ENCODE measurements at regions of chr5 and their contacts with region 1.

Region 1: DNA sequence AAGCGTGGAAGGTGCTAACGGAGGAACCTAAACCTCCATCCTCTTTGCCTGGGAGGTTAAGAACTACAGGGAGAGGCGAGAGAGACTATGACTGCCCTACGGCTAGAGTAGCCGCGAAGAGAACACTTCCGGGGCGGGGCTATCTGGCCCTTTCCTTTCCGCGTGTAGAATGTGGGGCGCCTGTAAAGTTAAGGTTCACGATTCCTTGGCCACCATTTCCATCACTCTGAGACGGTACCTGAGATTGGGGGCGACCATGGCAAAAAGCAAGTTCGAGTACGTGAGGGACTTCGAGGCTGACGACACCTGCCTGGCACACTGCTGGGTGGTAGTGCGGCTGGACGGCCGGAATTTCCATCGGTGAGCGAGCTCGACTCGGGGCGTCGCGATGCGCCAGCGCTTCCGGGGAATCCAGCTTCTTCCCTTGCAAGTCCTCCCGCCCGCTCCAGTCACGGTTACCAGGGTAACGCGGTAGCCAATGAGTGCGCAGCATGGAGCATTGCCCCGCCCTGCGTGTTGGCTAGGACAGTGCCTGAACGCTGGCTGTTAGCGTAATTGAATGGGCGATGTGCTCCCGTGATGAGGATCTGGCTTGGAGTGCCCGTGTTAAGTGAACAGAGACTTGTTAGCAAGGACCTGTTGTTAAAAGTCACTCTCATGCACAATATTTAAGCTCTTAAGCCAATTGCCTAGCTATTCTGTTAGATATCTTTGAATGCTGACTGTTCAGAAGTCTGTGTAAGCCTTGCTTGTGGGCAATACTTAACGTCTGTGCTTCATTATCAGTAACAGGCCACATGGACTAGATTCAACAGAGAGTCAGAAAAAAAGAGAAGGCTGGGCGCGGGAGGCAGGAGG is at the start of gene THG1L:
- DNase-seq: peak; percentile 96
- H3K4me3 ChIP-seq: peak within 1 kb of the TSS; percentile 75
- H3K27ac ChIP-seq: peak within 1 kb of the TSS; percentile 88
- H3K4me1 ChIP-seq: peaks cover 30% of the 10 kb centered on the region
- CTCF ChIP-seq: no peak
- total RNA-seq, gene THG1L: 20.7 and 30.5 TPM in 2 replicates

Region 2: GRCh38 chr5:157603333-157604190 is 127.9 kb before region 1 on chr5:
- CTCF ChIA-PET with region 1: no interaction called
- POLR2A ChIA-PET with region 1: no interaction called
- intact Hi-C with region 1: loop called (anchors 5 kb)
- DNase-seq: peak; percentile 37
- H3K4me3 ChIP-seq: no peak overlapping the region
- H3K27ac ChIP-seq: peak overlapping the region; percentile 73
- H3K4me1 ChIP-seq: peaks cover 66% of the 10 kb centered on the region
- CTCF ChIP-seq: no peak

Region 3: GRCh38 chr5:158819840-158820620 is 1088.5 kb after region 1 on chr5:
- CTCF ChIA-PET with region 1: interaction called, 10 read pairs
- POLR2A ChIA-PET with region 1: no interaction called
- intact Hi-C with region 1: no loop called
- DNase-seq: peak; percentile 52
- H3K4me3 ChIP-seq: peak overlapping the region; percentile 47
- H3K27ac ChIP-seq: peak overlapping the region; percentile 94
- H3K4me1 ChIP-seq: peaks cover 98% of the 10 kb centered on the region
- CTCF ChIP-seq: no peak

Measured in OCI-LY7 (cell line).